ENCODE measurements at regions of chr1 and their contacts with region 1.

Region 1: DNA sequence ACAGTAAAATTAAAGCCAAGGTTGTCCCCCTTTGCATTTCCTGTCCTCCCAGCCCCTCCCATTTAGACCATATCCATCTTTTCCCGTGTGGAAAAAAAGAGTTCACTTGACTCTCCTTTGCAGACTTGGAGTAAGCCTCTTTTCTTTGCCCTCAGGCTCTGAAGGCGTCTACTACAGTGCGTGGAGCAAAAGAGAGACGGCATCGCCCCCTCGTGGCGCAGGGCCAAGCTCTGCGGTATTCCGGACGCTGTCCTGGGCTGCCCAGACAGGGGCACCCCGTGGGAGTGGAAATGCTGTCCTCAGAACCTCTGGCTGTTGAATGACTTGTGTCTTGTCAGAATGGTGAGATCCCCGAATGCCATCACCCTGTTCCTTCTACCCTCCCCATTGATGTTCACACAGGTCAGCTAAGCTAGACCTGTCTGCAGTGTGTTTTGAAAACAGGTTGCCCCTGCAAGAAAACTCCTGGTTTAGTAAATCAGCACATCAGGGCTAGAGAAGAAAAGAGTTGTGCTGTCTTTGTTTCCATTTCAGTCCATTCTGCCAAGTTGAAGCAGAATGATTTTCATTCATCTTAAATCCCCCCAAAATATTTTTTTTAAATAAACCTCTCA is 12.3 kb upstream of the GJA8 start:
- DNase-seq: peak in 8 of 9 donors; percentile 7 to 68 (median 44)
- ATAC-seq: peak; percentile 78
- H3K4me3 ChIP-seq: no peak overlapping the region
- H3K4me3 Mint-ChIP-seq: no peak overlapping the region
- H3K27ac ChIP-seq: no peak overlapping the region
- H3K27ac Mint-ChIP-seq: no peak overlapping the region
- H3K4me1 ChIP-seq: no peaks in the 10 kb centered on the region
- H3K4me1 Mint-ChIP-seq: peaks cover 0 to 4% (median 0%) of the 10 kb centered on the region in 7 donors
- H3K27me3 ChIP-seq: no peaks in the 10 kb centered on the region
- H3K27me3 Mint-ChIP-seq: peaks cover 0 to 18% (median 0%) of the 10 kb centered on the region in 5 donors

Region 2: DNA sequence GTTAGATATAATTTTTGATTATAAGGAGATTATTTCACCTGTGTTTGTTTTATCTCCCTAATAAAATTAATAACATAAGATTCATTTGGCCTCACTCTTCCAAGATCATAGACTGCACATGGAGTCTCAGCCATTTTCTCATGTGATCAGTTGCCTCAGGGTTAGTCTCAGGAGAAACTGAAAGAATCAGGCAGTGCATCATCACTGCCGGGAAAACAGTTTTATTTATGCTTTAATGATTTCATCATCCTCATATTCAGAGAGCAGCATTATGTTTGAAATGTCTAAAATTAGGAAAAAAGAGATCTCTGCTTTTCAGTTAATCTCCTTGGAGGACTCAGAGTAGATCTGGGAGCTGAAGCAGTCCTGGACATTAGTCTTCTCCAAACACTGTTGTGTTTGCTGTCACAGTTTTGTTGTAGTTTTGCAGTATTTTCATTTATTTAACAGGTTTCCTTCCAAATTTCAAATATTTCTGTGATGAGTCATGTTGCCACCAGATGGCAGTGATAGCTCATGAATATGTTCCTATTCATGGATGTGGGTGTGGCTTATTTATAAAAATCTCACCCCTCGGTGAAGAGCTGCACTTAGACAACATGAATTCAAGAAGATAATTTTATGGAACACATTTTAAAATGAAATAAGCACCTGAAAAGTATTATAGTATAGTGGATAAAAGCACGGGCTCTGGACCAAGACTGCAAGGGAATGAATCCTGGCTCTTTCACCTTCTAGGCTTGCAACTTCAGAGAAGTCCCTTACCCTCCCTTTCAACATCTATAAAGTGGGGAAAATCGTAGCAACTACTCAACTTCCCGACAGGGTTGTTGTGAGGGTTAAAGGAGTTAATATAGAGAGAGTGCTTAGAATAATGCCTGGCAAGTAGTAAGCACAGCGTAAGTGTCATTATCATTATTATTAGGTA is 616.6 kb before region 1 on chr1:
- CTCF ChIA-PET with region 1: interaction called, 7 read pairs
- POLR2A ChIA-PET with region 1: no interaction called
- intact Hi-C with region 1: loop called in 1 of 2 experiments (anchors 2 kb)
- DNase-seq: peak in 7 of 9 donors; percentile 12 to 57 (median 42)
- ATAC-seq: peak; percentile 65
- H3K4me3 ChIP-seq: no peak overlapping the region
- H3K4me3 Mint-ChIP-seq: no peak overlapping the region
- H3K27ac ChIP-seq: no peak overlapping the region
- H3K27ac Mint-ChIP-seq: no peak overlapping the region
- H3K4me1 ChIP-seq: no peaks in the 10 kb centered on the region
- H3K4me1 Mint-ChIP-seq: peaks cover 0 to 6% (median 4%) of the 10 kb centered on the region in 7 donors
- H3K27me3 ChIP-seq: no peaks in the 10 kb centered on the region
- H3K27me3 Mint-ChIP-seq: no peaks in the 10 kb centered on the region

Region 3: DNA sequence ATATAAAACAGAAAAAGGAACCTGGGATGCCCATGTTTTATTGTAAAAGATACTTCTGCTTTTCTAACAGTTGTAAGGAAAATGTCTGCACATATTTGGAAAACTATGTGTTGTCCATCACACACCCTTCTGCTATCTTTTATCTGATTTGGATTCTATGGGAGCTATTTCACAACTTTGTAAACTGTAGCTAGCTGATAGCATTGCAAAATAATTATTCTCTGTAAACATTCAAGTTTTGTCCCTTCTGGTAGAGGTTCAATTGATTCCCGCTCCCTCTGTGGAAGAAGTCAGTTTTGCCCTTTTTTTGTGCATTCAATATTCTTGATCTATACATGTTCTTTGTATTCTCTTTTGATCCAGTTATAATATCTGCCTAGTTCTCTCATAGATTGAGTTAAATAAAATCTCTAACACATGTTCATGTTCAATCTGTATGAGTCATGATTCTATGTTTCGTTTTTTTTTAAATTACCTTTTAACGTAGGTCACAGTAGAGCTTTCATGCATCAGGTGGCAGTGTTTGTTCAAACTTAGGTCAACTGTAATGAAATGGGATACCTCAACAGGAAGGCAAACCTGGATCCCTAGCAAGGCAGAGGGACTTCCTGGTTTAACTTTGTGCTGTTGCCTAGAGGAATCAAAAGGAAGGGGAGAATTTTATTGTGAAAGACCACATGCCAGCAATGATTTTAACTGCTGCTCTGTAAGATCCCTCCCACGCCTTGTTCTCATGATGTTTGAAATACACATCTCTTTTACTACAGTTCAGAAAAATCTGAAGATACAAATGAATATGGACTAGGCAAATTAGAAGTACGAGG is 375.0 kb before region 1 on chr1:
- CTCF ChIA-PET with region 1: interaction called, 6 read pairs
- POLR2A ChIA-PET with region 1: no interaction called
- intact Hi-C with region 1: loop called in 1 of 2 experiments (anchors 1 kb)
- DNase-seq: peak in 6 of 9 donors; percentile 11 to 37 (median 24)
- ATAC-seq: peak; percentile 42
- H3K4me3 ChIP-seq: no peak overlapping the region
- H3K4me3 Mint-ChIP-seq: no peak overlapping the region
- H3K27ac ChIP-seq: no peak overlapping the region
- H3K27ac Mint-ChIP-seq: peak overlapping the region in 1 of 9 donors; percentile 6
- H3K4me1 ChIP-seq: no peaks in the 10 kb centered on the region
- H3K4me1 Mint-ChIP-seq: peaks cover 0 to 15% (median 6%) of the 10 kb centered on the region in 7 donors
- H3K27me3 ChIP-seq: no peaks in the 10 kb centered on the region
- H3K27me3 Mint-ChIP-seq: peaks cover 0 to 19% (median 3%) of the 10 kb centered on the region in 5 donors

Region 4: GRCh38 chr1:147627435-147628110 is 262.7 kb before region 1 on chr1:
- CTCF ChIA-PET with region 1: interaction called, 3 read pairs
- POLR2A ChIA-PET with region 1: no interaction called
- intact Hi-C with region 1: loop called in 1 of 2 experiments (anchors 5 kb)
- DNase-seq: peak; percentile 24 to 63 (median 44)
- ATAC-seq: peak; percentile 79
- H3K4me3 ChIP-seq: no peak overlapping the region
- H3K4me3 Mint-ChIP-seq: peak overlapping the region in 1 of 10 donors; percentile 20
- H3K27ac ChIP-seq: no peak overlapping the region
- H3K27ac Mint-ChIP-seq: no peak overlapping the region
- H3K4me1 ChIP-seq: peaks cover 0 to 34% of the 10 kb centered on the region in 2 donors
- H3K4me1 Mint-ChIP-seq: peaks cover 23 to 42% (median 35%) of the 10 kb centered on the region in 7 donors
- H3K27me3 ChIP-seq: no peaks in the 10 kb centered on the region
- H3K27me3 Mint-ChIP-seq: no peaks in the 10 kb centered on the region

Region 5: DNA sequence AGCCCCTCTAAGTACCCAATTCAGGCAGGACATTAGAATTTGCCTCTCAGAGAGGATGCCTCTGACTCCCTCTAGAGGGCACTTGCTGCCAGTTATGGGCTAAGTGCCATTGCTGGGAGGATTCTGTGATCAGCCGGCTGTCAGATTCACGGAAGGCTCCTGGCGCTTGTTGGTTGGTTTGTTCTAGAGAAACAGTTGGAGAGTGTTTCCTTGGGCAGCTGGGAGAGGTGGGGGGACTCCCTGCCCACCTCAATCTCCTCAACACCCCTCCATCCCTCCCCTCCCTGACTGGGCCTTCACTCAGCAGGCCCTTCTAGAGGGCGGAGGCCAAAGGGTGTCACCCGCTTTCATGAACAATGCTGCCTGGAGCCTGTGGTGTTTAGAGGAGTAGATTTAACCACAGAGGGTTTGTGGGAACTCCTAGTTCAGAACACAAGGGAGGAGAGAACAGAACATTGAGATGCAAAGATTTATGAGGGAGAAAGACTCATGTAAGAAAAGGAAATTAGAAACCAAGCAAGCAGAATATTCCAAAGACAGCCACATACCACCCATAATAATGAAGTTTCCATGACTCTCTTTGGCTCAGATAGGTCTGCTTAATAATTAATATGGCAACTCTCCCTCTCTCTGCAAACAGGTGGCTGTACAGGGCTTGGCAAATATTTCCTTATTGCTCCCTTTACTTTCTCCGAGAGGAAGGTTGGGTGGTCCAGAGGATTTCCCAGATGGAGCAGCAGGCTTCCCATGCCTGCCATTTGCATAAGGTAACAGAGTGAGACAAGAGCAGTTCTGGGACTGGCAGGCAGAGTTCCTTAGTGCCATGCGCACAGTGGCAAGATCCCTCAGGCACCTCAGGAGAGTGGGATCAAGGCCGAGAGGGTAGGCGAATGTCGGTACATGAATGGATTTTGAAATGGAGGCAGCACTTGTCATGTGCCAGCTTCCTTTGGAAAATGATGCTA is 190.0 kb before region 1 on chr1:
- CTCF ChIA-PET with region 1: interaction called, 23 read pairs
- POLR2A ChIA-PET with region 1: no interaction called
- intact Hi-C with region 1: loop called (anchors 1 kb)
- DNase-seq: peak; percentile 16 to 66 (median 58)
- ATAC-seq: peak; percentile 91
- H3K4me3 ChIP-seq: no peak overlapping the region
- H3K4me3 Mint-ChIP-seq: peak overlapping the region in 9 of 10 donors; percentile 18 to 77 (median 62)
- H3K27ac ChIP-seq: peak overlapping the region; percentile 29
- H3K27ac Mint-ChIP-seq: peak overlapping the region in 7 of 9 donors; percentile 15 to 78 (median 60)
- H3K4me1 ChIP-seq: peaks cover 0 to 7% of the 10 kb centered on the region in 2 donors
- H3K4me1 Mint-ChIP-seq: peaks cover 6 to 17% (median 15%) of the 10 kb centered on the region in 7 donors
- H3K27me3 ChIP-seq: no peaks in the 10 kb centered on the region
- H3K27me3 Mint-ChIP-seq: peaks cover 4 to 31% (median 11%) of the 10 kb centered on the region in 5 donors

Region 6: DNA sequence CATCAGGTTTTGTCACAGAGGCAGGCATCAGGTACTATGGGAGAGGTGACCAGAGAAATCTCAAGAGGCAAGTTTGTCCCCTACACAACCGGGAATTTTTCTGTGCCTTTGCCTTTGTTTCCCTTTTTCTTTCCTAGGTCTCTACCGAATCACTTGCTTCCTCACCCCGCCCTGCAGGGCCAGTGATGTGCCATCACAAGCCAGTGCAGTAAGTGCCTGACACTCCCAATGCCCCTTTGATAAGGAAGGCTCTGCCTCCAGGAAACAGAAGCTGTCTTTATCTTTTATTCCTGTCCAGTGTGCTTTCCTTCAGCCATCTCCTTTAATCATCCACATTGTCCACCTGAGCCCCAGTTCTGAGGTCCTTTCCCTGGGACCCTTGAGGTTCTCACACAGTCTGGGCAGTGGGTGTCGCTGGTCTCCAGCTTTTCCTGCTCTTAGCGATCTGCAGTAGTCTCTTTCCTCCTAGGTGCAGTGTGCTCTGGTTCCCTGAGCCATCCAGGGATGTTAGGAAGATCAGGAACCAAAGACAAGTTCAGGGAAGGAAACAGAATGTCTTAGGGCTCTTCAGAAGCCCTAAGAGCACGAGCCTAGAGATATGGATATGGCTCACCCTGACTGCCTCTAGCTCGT is 166.5 kb before region 1 on chr1:
- CTCF ChIA-PET with region 1: interaction called, 56 read pairs
- POLR2A ChIA-PET with region 1: no interaction called
- intact Hi-C with region 1: loop called (anchors 1 to 2 kb)
- DNase-seq: peak in 4 of 9 donors; percentile 22 to 42 (median 25)
- ATAC-seq: no peak
- H3K4me3 ChIP-seq: no peak overlapping the region
- H3K4me3 Mint-ChIP-seq: no peak overlapping the region
- H3K27ac ChIP-seq: no peak overlapping the region
- H3K27ac Mint-ChIP-seq: no peak overlapping the region
- H3K4me1 ChIP-seq: no peaks in the 10 kb centered on the region
- H3K4me1 Mint-ChIP-seq: peaks cover 0 to 3% (median 0%) of the 10 kb centered on the region in 7 donors
- H3K27me3 ChIP-seq: no peaks in the 10 kb centered on the region
- H3K27me3 Mint-ChIP-seq: peaks cover 8 to 31% (median 17%) of the 10 kb centered on the region in 5 donors

Region 7: DNA sequence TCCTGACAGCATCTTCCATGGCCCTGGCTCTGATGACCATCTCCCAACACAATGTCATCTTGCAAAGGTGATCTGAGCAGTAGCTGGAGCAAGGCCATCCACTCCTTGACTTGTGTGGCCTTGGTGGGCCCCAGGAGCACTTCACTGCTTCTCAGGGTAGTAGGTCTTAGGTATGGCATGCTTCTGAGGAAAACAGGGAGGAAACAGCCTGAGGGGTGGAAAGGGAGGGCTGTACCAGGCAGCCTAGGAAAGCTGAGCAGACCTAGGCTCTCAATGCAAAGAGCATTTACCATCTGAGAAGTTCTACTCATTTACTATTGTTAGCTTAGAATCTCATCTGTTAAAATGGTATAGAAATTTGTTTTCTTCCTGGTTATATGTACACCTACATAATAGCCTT is 382.6 kb after region 1 on chr1:
- CTCF ChIA-PET with region 1: no interaction called
- POLR2A ChIA-PET with region 1: no interaction called
- intact Hi-C with region 1: no loop called
- DNase-seq: no peak
- ATAC-seq: no peak
- H3K4me3 ChIP-seq: no peak overlapping the region
- H3K4me3 Mint-ChIP-seq: no peak overlapping the region
- H3K27ac ChIP-seq: no peak overlapping the region
- H3K27ac Mint-ChIP-seq: no peak overlapping the region
- H3K4me1 ChIP-seq: no peaks in the 10 kb centered on the region
- H3K4me1 Mint-ChIP-seq: no peaks in the 10 kb centered on the region
- H3K27me3 ChIP-seq: peaks cover 0 to 2% of the 10 kb centered on the region in 2 donors
- H3K27me3 Mint-ChIP-seq: peaks cover 33 to 47% (median 41%) of the 10 kb centered on the region in 5 donors